ENCODE measurements at regions of chr16 and their contacts with region 1.

Region 1: GRCh38 chr16:22206013-22206841 is at the start of gene EEF2K:
- DNase-seq: peak; percentile 63 to 91
- ATAC-seq: peak; percentile 90 to 94 (median 93)
- H3K4me3 ChIP-seq: peak within 1 kb of the TSS; percentile 67
- H3K4me3 Mint-ChIP-seq: peak within 1 kb of the TSS; percentile 95
- H3K27ac ChIP-seq: peak within 1 kb of the TSS; percentile 62
- H3K27ac Mint-ChIP-seq: peak within 1 kb of the TSS; percentile 72 to 81
- H3K4me1 ChIP-seq: peaks cover 16% of the 10 kb centered on the region
- H3K4me1 Mint-ChIP-seq: peaks cover 20% of the 10 kb centered on the region in 2 donors
- H3K27me3 ChIP-seq: no peaks in the 10 kb centered on the region
- H3K27me3 Mint-ChIP-seq: no peaks in the 10 kb centered on the region
- CTCF ChIP-seq: peak; percentile 74
- total RNA-seq, gene EEF2K: 12.6 to 33.5 (median 22.9) TPM

Region 2: GRCh38 chr16:22240023-22240710 is 33.9 kb after region 1 on chr16:
- intact Hi-C with region 1: loop called (anchors 5 kb)
- DNase-seq: no peak
- ATAC-seq: no peak
- H3K4me3 ChIP-seq: no peak overlapping the region
- H3K4me3 Mint-ChIP-seq: no peak overlapping the region
- H3K27ac ChIP-seq: peak overlapping the region; percentile 59
- H3K27ac Mint-ChIP-seq: peak overlapping the region; percentile 91 to 94
- H3K4me1 ChIP-seq: peaks cover 11% of the 10 kb centered on the region
- H3K4me1 Mint-ChIP-seq: peaks cover 7% of the 10 kb centered on the region in 2 donors
- H3K27me3 ChIP-seq: no peaks in the 10 kb centered on the region
- H3K27me3 Mint-ChIP-seq: no peaks in the 10 kb centered on the region
- CTCF ChIP-seq: no peak

Measured in natural killer cell (primary cell).